WTC11 (cell line): ENCODE measurements at regions of chr13 and their contacts with region 1.

Region 1: DNA sequence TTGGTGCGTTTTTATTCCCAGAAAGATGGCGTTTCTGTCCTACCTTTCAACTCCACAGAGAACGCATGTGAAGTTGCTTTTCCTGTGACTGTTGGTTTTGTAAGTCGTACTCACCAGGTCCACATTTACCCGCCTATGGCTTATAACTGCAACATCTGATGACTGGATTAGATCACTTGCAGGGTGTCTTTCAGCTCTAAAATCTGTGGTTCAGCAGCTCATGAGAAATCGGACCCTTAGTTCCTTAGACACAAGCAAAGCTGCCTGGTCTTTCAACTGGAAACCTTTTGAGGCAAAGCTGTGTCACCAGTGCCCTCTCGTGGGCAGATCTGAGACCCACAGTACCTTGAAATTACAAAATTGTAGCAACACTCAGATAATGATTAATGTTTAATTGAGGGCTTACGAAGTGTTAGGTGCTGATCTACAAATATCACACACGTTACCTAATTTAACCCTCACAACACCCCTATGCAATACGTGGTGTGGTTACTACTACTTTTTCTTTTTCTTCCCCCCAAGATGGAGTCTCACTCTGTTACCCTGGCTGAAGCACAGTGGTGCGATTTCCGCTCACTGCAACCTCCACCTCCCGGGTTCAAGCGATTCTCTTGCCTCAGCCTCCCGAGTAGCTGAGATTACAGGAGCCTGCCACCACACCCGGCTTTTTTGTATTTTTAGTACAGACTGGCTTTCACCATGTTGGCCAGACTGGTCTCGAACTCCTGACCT is 65.4 kb downstream of the RUBCNL start:
- DNase-seq: peak; percentile 55
- ATAC-seq: peak; percentile 86
- H3K4me3 Mint-ChIP-seq: no peak overlapping the region
- H3K27ac Mint-ChIP-seq: no peak overlapping the region; the same call in 1 of the 2 replicates
- H3K4me1 Mint-ChIP-seq: peaks cover 7% of the 10 kb centered on the region
- H3K27me3 Mint-ChIP-seq: peaks cover 41% of the 10 kb centered on the region
- CTCF ChIP-seq: peak; percentile 43; the same call in 1 of the 2 replicates

Region 2: GRCh38 chr13:45974500-45974899 is 347.2 kb before region 1 on chr13:
- CTCF ChIA-PET with region 1: no interaction called
- POLR2A ChIA-PET with region 1: no interaction called
- DNase-seq: no peak
- ATAC-seq: no peak
- H3K4me3 Mint-ChIP-seq: no peak overlapping the region
- H3K27ac Mint-ChIP-seq: no peak overlapping the region
- H3K4me1 Mint-ChIP-seq: peaks cover 5% of the 10 kb centered on the region; the same call in 1 of the 2 replicates
- H3K27me3 Mint-ChIP-seq: no peaks in the 10 kb centered on the region
- CTCF ChIP-seq: no peak

Region 3: GRCh38 chr13:46267166-46267565 is 54.5 kb before region 1 on chr13:
- CTCF ChIA-PET with region 1: no interaction called
- POLR2A ChIA-PET with region 1: no interaction called
- DNase-seq: no peak
- ATAC-seq: no peak
- H3K4me3 Mint-ChIP-seq: no peak overlapping the region
- H3K27ac Mint-ChIP-seq: no peak overlapping the region
- H3K4me1 Mint-ChIP-seq: peaks cover 13% of the 10 kb centered on the region
- H3K27me3 Mint-ChIP-seq: no peaks in the 10 kb centered on the region
- CTCF ChIP-seq: no peak

Region 4: DNA sequence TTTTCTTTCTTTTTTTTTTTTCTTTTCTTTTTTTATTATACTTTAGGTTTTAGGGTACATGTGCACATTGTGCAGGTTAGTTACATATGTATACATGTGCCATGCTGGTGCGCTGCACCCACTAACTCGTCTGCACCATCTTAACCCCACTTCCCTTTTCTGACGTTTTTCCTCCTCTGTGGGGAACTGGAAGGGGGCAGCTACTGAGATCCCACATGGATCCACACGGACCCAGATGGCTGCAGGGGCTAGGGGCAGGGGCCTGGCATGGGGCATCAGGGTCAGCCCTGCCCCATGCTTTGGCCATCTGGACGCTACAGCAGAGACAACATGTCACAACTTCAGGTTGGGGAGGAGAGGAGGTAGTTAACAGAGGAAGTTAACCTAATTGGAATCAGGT is 11.1 kb after region 1 on chr13:
- CTCF ChIA-PET with region 1: interaction called, 10 read pairs
- POLR2A ChIA-PET with region 1: no interaction called
- DNase-seq: no peak
- ATAC-seq: no peak
- H3K4me3 Mint-ChIP-seq: no peak overlapping the region
- H3K27ac Mint-ChIP-seq: no peak overlapping the region
- H3K4me1 Mint-ChIP-seq: peaks cover 5% of the 10 kb centered on the region; the same call in 1 of the 2 replicates
- H3K27me3 Mint-ChIP-seq: no peaks in the 10 kb centered on the region; the same call in 1 of the 2 replicates
- CTCF ChIP-seq: no peak